Left cardiac atrium (tissue), 4 donors: ENCODE measurements at regions of chr1 and their contacts with region 1.

Region 1: GRCh38 chr1:179882243-179883039 is at the start of gene TOR1AIP1:
- DNase-seq: peak; percentile 98
- ATAC-seq: peak; percentile 94 to 96
- total RNA-seq, gene TOR1AIP1: 48.3 to 50.4 TPM

Region 2: GRCh38 chr1:179954493-179955297 is 72.3 kb after region 1 on chr1 and contains the start of gene CEP350:
- intact Hi-C with region 1: loop called in 1 of 2 experiments (anchors 10 kb)
- DNase-seq: peak; percentile 99
- ATAC-seq: peak; percentile 99
- total RNA-seq, gene CEP350: 30.0 to 36.9 TPM